ENCODE measurements at regions of chr12 and their contacts with region 1.

Region 1: GRCh38 chr12:105053116-105053572 is 31.1 kb downstream of the ALDH1L2 start:
- DNase-seq: peak; percentile 50 to 86
- ATAC-seq: peak; percentile 80 to 91 (median 83)
- H3K4me3 ChIP-seq: no peak overlapping the region
- H3K4me3 Mint-ChIP-seq: no peak overlapping the region
- H3K27ac ChIP-seq: no peak overlapping the region
- H3K27ac Mint-ChIP-seq: no peak overlapping the region
- H3K4me1 ChIP-seq: no peaks in the 10 kb centered on the region
- H3K4me1 Mint-ChIP-seq: no peaks in the 10 kb centered on the region
- H3K27me3 ChIP-seq: no peaks in the 10 kb centered on the region
- H3K27me3 Mint-ChIP-seq: peaks cover 7 to 19% of the 10 kb centered on the region in 2 donors
- CTCF ChIP-seq: peak; percentile 91

Region 2: DNA sequence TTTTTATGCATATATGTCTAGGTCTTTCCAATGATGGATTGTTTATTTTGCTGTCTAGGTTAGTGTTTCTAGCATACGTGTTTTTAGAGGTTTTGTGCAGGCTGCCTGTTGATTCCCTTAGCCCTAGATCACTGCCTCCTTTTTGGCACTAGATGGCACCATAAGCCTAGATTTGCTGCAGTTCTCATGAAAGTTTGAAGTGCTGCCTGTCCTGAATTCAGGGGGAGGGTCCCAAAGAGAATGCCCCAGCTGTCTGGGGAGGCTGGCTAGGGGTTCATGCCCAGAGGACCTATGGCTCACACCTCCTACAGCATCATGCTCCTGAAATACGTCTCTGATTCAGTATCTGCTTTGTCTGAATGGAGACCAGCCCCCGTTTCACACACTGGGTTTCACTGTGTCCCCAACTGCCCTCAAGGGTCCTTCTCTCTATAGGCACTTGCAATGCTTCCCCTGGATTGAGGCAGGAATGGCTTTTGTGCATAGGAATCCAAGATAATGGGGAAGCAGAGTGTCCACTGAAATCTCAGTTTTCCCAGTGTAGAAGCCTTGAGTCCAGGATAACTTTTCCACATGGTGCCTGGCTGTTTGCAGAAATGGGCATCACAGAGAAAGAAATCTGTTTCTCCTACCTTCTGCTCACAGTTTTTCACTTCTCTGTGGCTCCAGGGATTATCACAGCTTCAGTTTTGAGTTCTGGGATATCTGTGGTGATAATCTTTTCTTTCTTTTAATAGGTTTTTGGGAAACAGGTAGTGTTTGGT is 851.7 kb before region 1 on chr12:
- intact Hi-C with region 1: loop called (anchors 1 kb)
- DNase-seq: peak; percentile 31 to 84
- ATAC-seq: peak; percentile 61 to 86 (median 76)
- H3K4me3 ChIP-seq: no peak overlapping the region
- H3K4me3 Mint-ChIP-seq: no peak overlapping the region
- H3K27ac ChIP-seq: no peak overlapping the region
- H3K27ac Mint-ChIP-seq: no peak overlapping the region
- H3K4me1 ChIP-seq: no peaks in the 10 kb centered on the region
- H3K4me1 Mint-ChIP-seq: no peaks in the 10 kb centered on the region
- H3K27me3 ChIP-seq: no peaks in the 10 kb centered on the region
- H3K27me3 Mint-ChIP-seq: peaks cover 16 to 34% of the 10 kb centered on the region in 2 donors
- CTCF ChIP-seq: peak; percentile 92

Measured in natural killer cell (primary cell).